ENCODE measurements at regions of chr16 and their contacts with region 1.

Region 1: DNA sequence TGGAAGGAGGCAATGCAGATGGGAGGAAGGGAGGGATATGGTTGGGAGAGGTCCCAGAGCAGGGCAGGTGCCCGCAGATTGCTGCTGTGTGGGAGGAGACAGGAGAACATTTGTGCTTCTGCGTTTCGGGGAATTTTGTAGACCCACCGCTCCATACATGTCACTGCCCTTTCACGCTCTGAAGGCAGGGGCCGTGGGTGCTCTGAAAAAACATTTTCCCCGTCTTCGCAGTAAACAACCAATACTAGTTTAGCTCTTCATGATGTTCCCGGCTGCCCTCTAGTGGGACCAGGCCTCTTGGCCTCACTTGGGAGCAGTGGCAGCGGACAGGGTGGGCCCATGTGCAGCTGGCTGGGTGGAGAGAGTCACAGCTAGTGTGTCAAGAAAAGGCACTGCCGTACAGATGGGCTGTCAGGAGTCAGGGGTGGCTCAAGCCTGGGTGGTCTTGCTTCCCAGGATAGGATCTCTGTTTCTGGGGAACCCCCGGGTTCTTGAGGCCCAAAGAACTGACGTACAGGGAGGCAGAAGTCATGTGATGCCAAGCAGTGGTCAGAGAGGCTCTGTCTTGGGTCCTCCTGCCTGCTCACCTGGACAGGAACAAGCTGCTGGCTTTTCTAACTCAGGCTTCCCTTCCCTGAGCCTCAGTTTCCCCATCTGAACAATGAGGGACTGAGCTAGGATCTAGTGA is 46.5 kb upstream of the CPNE2 start:
- DNase-seq: peak; percentile 92

Region 2: GRCh38 chr16:56866943-56867830 is 178.7 kb before region 1 on chr16:
- intact Hi-C with region 1: loop called in 1 of 2 experiments (anchors 5 kb)
- DNase-seq: no peak

Region 3: DNA sequence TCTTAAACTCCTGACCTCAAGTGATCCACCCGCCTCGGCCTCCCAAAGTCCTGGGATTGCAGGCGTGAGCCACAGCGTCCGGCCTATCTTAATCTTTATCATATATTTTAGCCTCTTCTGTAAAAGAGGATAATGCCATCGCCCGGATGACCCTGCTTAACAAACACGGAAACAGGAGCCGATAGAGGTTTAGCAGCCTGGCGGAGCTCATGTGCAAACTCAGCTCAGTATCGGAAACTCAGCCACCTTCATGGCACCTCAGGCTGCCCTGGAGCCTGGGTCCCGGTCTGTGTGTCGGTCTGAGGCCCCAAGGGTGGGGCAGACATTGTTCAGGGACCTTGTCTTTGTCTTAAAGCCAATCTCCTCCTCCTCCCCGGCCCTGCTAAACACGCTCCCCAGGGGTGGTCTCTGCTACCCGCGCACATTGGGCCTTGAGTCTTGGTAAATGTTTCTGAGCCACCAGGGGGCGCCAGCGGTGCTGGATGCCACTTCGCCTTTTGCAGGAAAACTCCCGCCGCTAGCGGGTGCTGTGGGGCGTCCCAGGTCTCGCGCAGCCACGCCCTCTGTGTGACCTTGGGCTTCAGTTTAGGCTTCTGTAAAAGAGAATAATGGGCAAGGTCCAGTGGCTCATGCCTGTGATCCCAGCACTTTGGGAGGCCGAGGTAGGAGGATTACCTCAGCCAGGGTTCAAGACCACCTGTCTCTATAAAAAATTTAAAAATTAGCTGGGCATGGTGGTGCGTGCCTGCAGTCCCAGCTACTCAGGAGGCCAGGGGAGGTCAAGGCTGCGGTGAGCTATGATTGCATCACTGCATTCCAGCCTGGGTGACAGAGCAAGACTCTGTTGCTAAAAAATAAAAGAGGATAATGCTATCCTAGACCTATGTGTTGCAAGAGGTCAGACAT is 81.3 kb before region 1 on chr16:
- intact Hi-C with region 1: loop called in 1 of 2 experiments (anchors 5 kb)
- DNase-seq: peak; percentile 97

Region 4: GRCh38 chr16:57091975-57092785 is 46.3 kb after region 1 on chr16 and contains the start of gene CPNE2:
- intact Hi-C with region 1: loop called in 1 of 2 experiments (anchors 1 kb)
- DNase-seq: no peak
- total RNA-seq, gene CPNE2: 26.7 to 28.4 TPM

Region 5: GRCh38 chr16:57106767-57107166 is 60.9 kb after region 1 on chr16:
- intact Hi-C with region 1: no loop called
- DNase-seq: no peak